ENCODE measurements at regions of chr15 and their contacts with region 1.

Region 1: DNA sequence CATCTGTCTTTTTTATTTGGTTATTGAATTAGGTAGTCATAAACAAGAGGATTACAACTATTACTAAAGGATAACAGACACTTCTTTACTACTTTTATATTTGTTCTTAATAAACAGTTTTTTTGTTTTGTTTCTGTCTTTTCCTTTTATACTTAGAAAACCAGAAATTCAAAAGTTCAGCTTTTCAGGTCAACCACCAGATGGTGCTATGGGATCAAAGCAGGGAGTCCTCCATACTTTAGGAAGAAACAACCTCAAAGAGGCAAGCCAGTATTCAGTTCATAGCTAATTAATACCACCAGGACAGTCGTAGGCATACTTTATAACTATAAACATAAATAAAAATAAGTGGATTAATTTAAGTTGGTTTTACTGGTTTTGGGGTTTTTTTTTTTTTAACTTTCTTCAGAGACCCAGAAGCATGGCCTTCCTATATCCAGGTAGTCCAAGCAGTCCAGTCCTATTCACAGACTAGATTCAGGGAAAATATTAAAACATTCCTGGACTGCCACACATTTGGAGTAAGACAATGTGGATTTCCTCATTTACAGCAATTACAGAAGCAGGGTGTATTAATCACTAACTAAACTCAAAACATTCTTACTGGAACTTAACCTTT is 16.0 kb upstream of the EID1 start:
- DNase-seq: peak; percentile 20
- H3K4me3 Mint-ChIP-seq: no peak overlapping the region
- H3K27ac Mint-ChIP-seq: peak overlapping the region; percentile 28
- H3K4me1 Mint-ChIP-seq: peaks cover 19% of the 10 kb centered on the region
- H3K27me3 Mint-ChIP-seq: peaks cover 2% of the 10 kb centered on the region

Region 2: GRCh38 chr15:48905847-48906246 is 43.9 kb after region 1 on chr15:
- intact Hi-C with region 1: no loop called
- DNase-seq: no peak
- H3K4me3 Mint-ChIP-seq: no peak overlapping the region
- H3K27ac Mint-ChIP-seq: peak overlapping the region; percentile 58
- H3K4me1 Mint-ChIP-seq: peaks cover 31% of the 10 kb centered on the region
- H3K27me3 Mint-ChIP-seq: no peaks in the 10 kb centered on the region

Region 3: GRCh38 chr15:48965972-48966371 is 104.0 kb after region 1 on chr15:
- intact Hi-C with region 1: loop called (anchors 1 kb)
- DNase-seq: no peak
- H3K4me3 Mint-ChIP-seq: peak overlapping the region; percentile 16
- H3K27ac Mint-ChIP-seq: peak overlapping the region; percentile 97
- H3K4me1 Mint-ChIP-seq: peaks cover 72% of the 10 kb centered on the region
- H3K27me3 Mint-ChIP-seq: no peaks in the 10 kb centered on the region

Region 4: DNA sequence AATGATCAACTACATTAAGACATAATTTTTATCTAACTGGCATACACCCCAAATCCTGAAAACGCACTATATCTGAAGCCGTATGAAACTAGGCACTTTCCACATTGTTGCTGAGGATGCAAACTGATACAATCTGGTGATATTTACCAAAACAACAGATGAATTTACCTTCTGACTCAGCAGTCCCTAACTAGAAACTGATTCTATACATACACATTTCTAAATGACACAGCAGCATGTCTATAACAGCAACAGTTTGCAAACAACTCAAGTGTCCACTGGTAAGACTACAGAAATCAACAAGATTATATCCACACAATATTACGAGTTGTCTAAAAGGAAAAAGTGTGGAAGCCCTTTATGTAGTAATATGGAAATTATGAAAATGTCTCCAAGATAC is 161.4 kb after region 1 on chr15:
- intact Hi-C with region 1: loop called (anchors 5 kb)
- DNase-seq: no peak
- H3K4me3 Mint-ChIP-seq: no peak overlapping the region
- H3K27ac Mint-ChIP-seq: peak overlapping the region; percentile 47
- H3K4me1 Mint-ChIP-seq: peaks cover 19% of the 10 kb centered on the region
- H3K27me3 Mint-ChIP-seq: no peaks in the 10 kb centered on the region

Region 5: DNA sequence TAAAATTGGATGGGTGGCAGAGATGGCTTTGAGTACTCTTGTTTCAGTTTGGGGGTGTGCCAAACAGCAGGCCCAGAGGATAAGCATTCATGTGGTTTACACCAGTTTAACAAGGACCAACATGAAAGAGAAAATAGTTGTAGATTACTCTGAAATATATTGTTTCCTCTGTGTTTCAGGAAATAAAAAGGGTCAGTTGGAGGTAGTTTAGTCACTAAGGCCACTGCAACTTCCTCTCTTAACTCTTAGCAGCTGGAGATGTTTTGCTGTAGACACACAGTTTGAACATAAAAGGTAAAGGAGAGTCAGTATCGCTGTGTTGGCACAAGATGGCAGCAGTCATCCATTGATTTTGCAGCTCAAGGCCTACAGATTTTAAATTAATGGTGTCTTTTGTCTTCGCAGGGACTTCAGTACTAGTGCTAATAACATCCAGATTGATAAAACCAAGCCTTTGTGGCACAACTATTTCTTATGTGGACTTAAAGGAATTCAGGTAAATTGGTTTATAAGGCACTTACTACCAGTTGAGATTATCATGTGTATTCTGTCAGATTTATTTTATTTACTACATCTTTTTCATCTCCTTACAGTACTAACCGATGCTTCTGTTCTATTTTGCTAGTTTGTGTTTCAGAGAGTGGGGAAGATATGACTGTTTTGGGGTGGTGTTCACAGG is 373.7 kb after region 1 on chr15:
- intact Hi-C with region 1: loop called (anchors 10 kb)
- DNase-seq: peak; percentile 42
- H3K4me3 Mint-ChIP-seq: no peak overlapping the region
- H3K27ac Mint-ChIP-seq: peak overlapping the region; percentile 14
- H3K4me1 Mint-ChIP-seq: peaks cover 20% of the 10 kb centered on the region
- H3K27me3 Mint-ChIP-seq: no peaks in the 10 kb centered on the region

Region 6: DNA sequence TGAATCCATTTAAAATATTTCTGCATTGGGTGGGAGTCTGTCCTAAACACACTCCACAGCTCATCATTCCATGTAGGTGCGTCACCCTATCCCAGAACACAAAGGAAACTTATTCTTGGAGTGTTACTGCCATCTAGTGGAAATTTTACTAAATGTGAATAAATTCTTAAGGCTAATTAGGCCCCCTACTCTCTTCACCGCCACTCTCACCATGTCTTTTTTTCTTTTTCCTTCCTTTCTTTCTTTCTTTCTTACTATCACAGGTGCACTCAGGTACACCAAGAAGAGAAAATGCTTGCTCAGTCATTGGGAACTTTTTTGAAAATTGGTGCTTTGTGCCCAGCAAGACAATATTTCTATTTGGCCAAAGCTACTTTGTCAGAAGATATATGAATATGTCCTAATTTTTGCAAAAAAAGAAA is 1283.5 kb after region 1 on chr15:
- intact Hi-C with region 1: loop called (anchors 5 kb)
- DNase-seq: no peak
- H3K4me3 Mint-ChIP-seq: no peak overlapping the region
- H3K27ac Mint-ChIP-seq: no peak overlapping the region
- H3K4me1 Mint-ChIP-seq: peaks cover 43% of the 10 kb centered on the region
- H3K27me3 Mint-ChIP-seq: no peaks in the 10 kb centered on the region